ENCODE measurements at regions of chr5 and their contacts with region 1.

Region 1: DNA sequence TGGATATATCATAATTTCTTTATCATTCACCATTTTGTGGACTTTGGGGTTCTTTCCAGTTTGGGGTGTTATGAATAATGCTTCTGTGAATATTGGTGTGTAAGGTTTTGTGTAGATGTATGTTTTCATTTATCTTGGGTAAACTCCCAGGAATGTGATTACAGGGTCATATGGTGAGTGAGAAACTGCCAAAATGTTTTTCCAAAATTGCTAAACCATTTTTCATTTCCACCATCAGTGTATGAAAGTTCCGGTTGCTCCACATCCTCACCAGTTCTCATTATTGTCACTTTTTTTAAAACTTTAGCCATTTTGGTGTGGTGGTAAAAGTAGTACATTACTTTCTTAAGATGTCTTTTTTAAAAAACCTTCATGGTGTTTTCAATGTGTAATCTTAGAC is 152.9 kb downstream of the NIPBL start:
- DNase-seq: no peak
- ATAC-seq: no peak
- H3K4me3 ChIP-seq: no peak overlapping the region
- H3K27ac ChIP-seq: no peak overlapping the region
- H3K4me1 ChIP-seq: no peaks in the 10 kb centered on the region
- H3K27me3 ChIP-seq: no peaks in the 10 kb centered on the region
- CTCF ChIP-seq: no peak
- POLR2A ChIP-seq: no peak

Region 2: DNA sequence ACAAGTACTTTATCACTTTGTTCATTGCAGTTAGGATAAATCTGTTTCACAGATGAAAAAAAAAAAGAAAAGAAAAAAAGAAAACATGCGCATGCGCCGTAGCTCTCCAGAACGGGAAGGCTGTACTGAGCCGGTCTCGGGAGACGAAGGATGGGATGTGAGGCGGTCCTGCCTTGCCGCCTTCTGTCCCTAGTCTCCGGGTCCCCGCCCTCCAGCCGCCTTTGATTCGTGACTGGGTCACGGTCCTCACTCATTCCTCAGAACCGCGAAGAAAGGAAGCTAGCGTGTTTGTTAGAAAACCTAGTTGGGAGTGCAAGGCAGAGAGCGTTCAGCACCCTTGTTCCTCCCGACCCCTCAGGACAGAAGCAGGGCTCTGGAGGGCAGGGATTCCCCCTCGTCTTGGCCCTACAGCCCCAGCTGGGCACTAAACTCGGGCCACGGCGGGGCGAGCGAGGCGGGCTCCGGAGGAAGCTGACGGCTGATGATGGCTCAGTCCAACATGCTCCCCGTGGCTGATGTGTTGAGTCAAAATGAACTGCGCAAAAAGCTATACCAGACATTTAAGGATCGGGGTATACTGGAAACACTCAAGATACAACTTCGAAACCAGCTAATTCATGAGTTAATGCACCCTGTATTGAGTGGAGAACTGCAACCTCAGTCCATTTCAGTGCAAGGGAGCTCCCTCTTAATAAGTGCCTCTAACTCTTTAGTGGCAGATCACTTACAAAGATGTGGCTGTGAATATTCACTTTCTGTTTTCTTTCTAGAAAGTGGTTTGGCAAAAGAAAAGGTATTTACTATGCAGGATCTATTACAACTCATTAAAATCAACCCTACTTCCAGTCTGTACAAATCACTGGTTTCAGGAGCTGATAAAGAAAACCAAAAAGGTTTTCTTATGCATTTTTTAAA is 179.7 kb after region 1 on chr5:
- intact Hi-C with region 1: loop called in 1 of 10 experiments (anchors 10 kb)
- DNase-seq: peak; percentile 23 to 64 (median 42)
- ATAC-seq: peak in 3 of 4 donors; percentile 64 to 78 (median 65)
- H3K4me3 ChIP-seq: peak overlapping the region in 8 of 12 donors; percentile 14 to 43 (median 38)
- H3K27ac ChIP-seq: peak overlapping the region in 2 of 12 donors; percentile 28 to 39
- H3K4me1 ChIP-seq: peaks cover 0 to 1% (median 0%) of the 10 kb centered on the region in 12 donors
- H3K27me3 ChIP-seq: no peaks in the 10 kb centered on the region
- CTCF ChIP-seq: no peak
- POLR2A ChIP-seq: no peak